G401 (cell line): ENCODE measurements at regions of chr1 and their contacts with region 1.

Region 1: DNA sequence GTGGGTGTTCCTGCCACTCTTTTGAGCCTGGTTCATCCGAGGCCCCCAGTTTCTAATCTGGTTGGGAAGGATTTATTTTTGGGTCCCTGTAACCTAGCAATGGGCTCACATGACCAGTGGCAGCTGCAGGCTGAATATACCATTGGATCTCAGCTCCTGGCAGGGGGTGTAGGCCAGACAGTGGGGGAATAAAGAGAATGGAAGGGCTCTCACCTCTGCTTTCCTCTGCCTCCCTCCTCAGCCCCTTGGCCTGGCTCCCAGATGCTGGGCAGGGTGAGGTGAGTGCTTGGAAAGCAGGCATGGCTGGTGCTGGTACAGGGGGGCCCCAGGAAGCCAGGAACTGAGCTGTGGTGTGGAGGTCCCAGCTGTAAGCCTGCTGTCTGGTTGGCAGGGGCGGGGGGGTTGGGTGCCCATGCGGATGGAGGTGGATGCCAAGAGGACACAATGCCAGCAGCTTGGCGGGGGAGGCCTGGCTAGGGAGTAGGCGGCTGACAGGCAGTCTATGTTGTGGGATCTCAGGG is 3.6 kb upstream of the GPR61 start:
- DNase-seq: peak; percentile 88

Region 2: GRCh38 chr1:109370712-109371455 is 165.1 kb before region 1 on chr1:
- in situ Hi-C with region 1: no loop called
- DNase-seq: no peak

Region 3: GRCh38 chr1:109438798-109439297 is 97.2 kb before region 1 on chr1:
- in situ Hi-C with region 1: no loop called
- DNase-seq: no peak

Region 4: DNA sequence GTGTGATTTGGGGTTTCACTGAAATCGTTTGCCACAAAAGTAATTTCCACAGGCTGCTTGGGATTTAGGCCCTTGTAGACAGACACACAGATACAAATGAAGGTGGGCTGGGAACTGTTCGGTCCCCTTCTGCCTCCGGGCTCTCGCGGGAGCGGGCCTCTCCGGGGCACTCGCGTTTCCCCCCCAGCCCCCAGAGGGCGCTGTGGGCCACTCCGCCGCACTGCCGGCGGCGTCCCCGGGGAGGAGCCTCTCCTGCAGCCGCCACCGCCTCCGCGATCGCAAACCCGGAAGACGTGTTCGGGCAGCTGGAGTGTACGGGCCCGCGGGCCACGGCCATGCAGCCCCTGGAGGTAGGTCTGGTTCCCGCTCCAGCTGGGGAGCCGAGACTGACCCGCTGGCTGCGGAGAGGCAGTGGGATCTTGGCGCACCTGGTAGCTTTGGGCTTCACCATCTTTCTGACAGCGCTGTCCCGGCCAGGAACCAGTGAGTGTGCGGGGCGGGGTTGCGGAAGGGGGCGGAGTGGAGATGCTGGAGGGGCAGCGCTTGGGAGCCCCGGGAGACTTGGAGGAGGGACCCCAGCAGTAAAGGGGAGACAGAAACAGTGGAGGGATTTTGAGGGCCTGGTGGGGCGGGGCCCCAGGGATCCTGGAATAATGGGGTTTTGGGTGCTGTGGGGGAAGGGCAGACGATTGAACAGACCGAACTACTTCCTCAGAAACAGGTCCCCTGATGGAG is 42.1 kb before region 1 on chr1 and contains the start of gene CYB561D1:
- in situ Hi-C with region 1: loop called (anchors 5 kb)
- DNase-seq: peak; percentile 81
- total RNA-seq, gene CYB561D1: 0.31 and 3.1 TPM in 2 replicates

Region 5: DNA sequence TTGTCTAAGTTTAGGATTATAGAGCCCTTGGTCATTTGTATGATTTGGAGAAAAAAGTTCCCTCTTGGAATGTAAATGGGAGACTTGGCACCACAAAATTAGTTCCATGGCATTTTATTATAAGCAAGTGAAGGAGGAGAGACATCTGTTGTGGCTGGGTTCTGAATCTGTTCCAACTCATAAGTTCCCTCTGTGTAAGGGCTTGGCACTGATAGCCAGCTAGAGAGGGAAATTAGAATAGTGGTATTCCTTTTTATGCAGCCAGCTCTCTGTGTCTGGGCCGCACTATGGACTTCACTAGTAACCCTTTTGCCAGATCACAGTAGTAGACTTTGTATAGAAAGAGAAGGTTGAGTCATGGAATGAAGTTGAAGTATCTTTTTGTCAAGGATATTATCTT is 43.5 kb after region 1 on chr1:
- in situ Hi-C with region 1: no loop called
- DNase-seq: peak; percentile 91

Region 6: GRCh38 chr1:109712321-109712864 is 176.4 kb after region 1 on chr1:
- in situ Hi-C with region 1: no loop called
- DNase-seq: no peak